ENCODE measurements at regions of chr1 and their contacts with region 1.

Region 1: GRCh38 chr1:150925816-150926741 is at the start of gene SETDB1:
- DNase-seq: peak; percentile 73
- H3K4me3 ChIP-seq: peak within 1 kb of the TSS; percentile 58
- H3K27me3 ChIP-seq: no peaks in the 10 kb centered on the region
- CTCF ChIP-seq: 0 out of 2 replicates have a peak, but pooled peaks have one; percentile 12
- polyA plus RNA-seq, gene SETDB1: 26.2 and 30.7 TPM in 2 replicates

Region 2: GRCh38 chr1:150708595-150708994 is 217.5 kb before region 1 on chr1:
- CTCF ChIA-PET with region 1: no interaction called
- POLR2A ChIA-PET with region 1: interaction called, 15 read pairs
- DNase-seq: no peak
- H3K4me3 ChIP-seq: no peak overlapping the region
- H3K27me3 ChIP-seq: no peaks in the 10 kb centered on the region
- CTCF ChIP-seq: no peak

Region 3: GRCh38 chr1:150881331-150882070 is 44.6 kb before region 1 on chr1:
- CTCF ChIA-PET with region 1: interaction called, 17 read pairs
- POLR2A ChIA-PET with region 1: interaction called, 6 read pairs
- DNase-seq: peak; percentile 94
- H3K4me3 ChIP-seq: no peak overlapping the region
- H3K27me3 ChIP-seq: no peaks in the 10 kb centered on the region
- CTCF ChIP-seq: no peak

Region 4: GRCh38 chr1:150890033-150890416 is 36.1 kb before region 1 on chr1:
- CTCF ChIA-PET with region 1: interaction called, 14 read pairs
- POLR2A ChIA-PET with region 1: no interaction called
- DNase-seq: no peak
- H3K4me3 ChIP-seq: no peak overlapping the region
- H3K27me3 ChIP-seq: no peaks in the 10 kb centered on the region
- CTCF ChIP-seq: no peak

Region 5: GRCh38 chr1:150912623-150913022 is 13.5 kb before region 1 on chr1:
- CTCF ChIA-PET with region 1: interaction called, 14 read pairs
- POLR2A ChIA-PET with region 1: no interaction called
- DNase-seq: no peak
- H3K4me3 ChIP-seq: no peak overlapping the region
- H3K27me3 ChIP-seq: no peaks in the 10 kb centered on the region
- CTCF ChIP-seq: no peak

Region 6: GRCh38 chr1:150944856-150945255 is 18.8 kb after region 1 on chr1:
- CTCF ChIA-PET with region 1: no interaction called
- POLR2A ChIA-PET with region 1: no interaction called
- DNase-seq: no peak
- H3K4me3 ChIP-seq: no peak overlapping the region
- H3K27me3 ChIP-seq: no peaks in the 10 kb centered on the region
- CTCF ChIP-seq: no peak

Measured in BJ (cell line).